ENCODE measurements at regions of chr5 and their contacts with region 1.

Region 1: GRCh38 chr5:72816311-72817145 is at the start of gene TNPO1:
- DNase-seq: peak; percentile 95 to 97
- ATAC-seq: peak; percentile 89 to 93 (median 90)
- H3K4me3 ChIP-seq: peak within 1 kb of the TSS; percentile 91
- H3K27ac ChIP-seq: peak within 1 kb of the TSS; percentile 99
- H3K4me1 ChIP-seq: peaks cover 49% of the 10 kb centered on the region
- H3K27me3 ChIP-seq: no peaks in the 10 kb centered on the region
- CTCF ChIP-seq: no peak
- total RNA-seq, gene TNPO1: 64.0 to 99.2 (median 77.6) TPM

Region 2: GRCh38 chr5:72366324-72366976 is 450.1 kb before region 1 on chr5:
- intact Hi-C with region 1: loop called in 1 of 2 experiments (anchors 5 kb)
- DNase-seq: peak in 1 of 2 donors; percentile 39
- ATAC-seq: peak; percentile 81 to 95 (median 84)
- H3K4me3 ChIP-seq: no peak overlapping the region
- H3K27ac ChIP-seq: peak overlapping the region; percentile 4
- H3K4me1 ChIP-seq: peaks cover 13% of the 10 kb centered on the region
- H3K27me3 ChIP-seq: no peaks in the 10 kb centered on the region
- CTCF ChIP-seq: peak; percentile 83

Region 3: GRCh38 chr5:72611118-72611730 is 205.3 kb before region 1 on chr5:
- intact Hi-C with region 1: loop called (anchors 2 to 5 kb)
- DNase-seq: peak; percentile 78 to 85
- ATAC-seq: peak; percentile 97 to 100 (median 98)
- H3K4me3 ChIP-seq: peak overlapping the region; percentile 8
- H3K27ac ChIP-seq: peak overlapping the region; percentile 7
- H3K4me1 ChIP-seq: peaks cover 6% of the 10 kb centered on the region
- H3K27me3 ChIP-seq: no peaks in the 10 kb centered on the region
- CTCF ChIP-seq: peak; percentile 97

Region 4: DNA sequence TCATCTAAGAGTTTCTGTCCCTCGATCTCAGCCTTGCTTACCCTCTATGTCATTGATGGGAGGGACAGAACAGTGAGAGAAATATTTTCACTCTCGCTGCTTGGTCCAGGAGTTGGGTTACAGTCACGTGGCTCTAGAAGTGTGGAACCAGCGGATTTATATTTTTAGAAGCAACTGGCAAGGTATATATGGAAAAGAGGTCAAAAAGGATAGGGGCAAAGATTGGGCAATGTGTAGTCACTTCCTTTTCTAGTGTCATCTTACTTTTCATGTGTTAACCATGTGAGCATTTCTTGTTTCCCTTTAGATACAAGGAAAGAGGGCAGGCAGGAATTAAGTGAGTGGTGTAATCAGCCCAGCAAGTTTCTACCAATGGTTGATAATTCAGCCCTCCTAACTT is 197.8 kb before region 1 on chr5:
- intact Hi-C with region 1: loop called (anchors 2 to 5 kb)
- DNase-seq: no peak
- ATAC-seq: peak; percentile 83 to 92 (median 90)
- H3K4me3 ChIP-seq: no peak overlapping the region
- H3K27ac ChIP-seq: peak overlapping the region; percentile 92
- H3K4me1 ChIP-seq: peaks cover 52% of the 10 kb centered on the region
- H3K27me3 ChIP-seq: no peaks in the 10 kb centered on the region
- CTCF ChIP-seq: no peak

Region 5: GRCh38 chr5:72661405-72661804 is 155.1 kb before region 1 on chr5:
- intact Hi-C with region 1: loop called in 1 of 2 experiments (anchors 5 kb)
- DNase-seq: no peak
- ATAC-seq: peak; percentile 63 to 76 (median 73)
- H3K4me3 ChIP-seq: no peak overlapping the region
- H3K27ac ChIP-seq: no peak overlapping the region
- H3K4me1 ChIP-seq: peaks cover 24% of the 10 kb centered on the region
- H3K27me3 ChIP-seq: no peaks in the 10 kb centered on the region
- CTCF ChIP-seq: no peak

Region 6: GRCh38 chr5:72854419-72854818 is 37.9 kb after region 1 on chr5:
- intact Hi-C with region 1: loop called in 1 of 2 experiments (anchors 5 kb)
- DNase-seq: no peak
- ATAC-seq: peak in 1 of 4 donors; percentile 46
- H3K4me3 ChIP-seq: no peak overlapping the region
- H3K27ac ChIP-seq: no peak overlapping the region
- H3K4me1 ChIP-seq: peaks cover 59% of the 10 kb centered on the region
- H3K27me3 ChIP-seq: no peaks in the 10 kb centered on the region
- CTCF ChIP-seq: no peak

Region 7: GRCh38 chr5:73236541-73237128 is 420.1 kb after region 1 on chr5:
- intact Hi-C with region 1: no loop called
- DNase-seq: no peak
- ATAC-seq: no peak
- H3K4me3 ChIP-seq: no peak overlapping the region
- H3K27ac ChIP-seq: no peak overlapping the region
- H3K4me1 ChIP-seq: peaks cover 4% of the 10 kb centered on the region
- H3K27me3 ChIP-seq: peaks cover 3 to 80% (median 10%) of the 10 kb centered on the region in 3 donors
- CTCF ChIP-seq: no peak